Activated CD4-positive, alpha-beta T cell treated with anti-CD3 and anti-CD28 coated beads, Interleukin-2, amount 10 ng/mL, durations not matched to agents 7 days and 5 days (primary cell): ENCODE measurements at regions of chr2 and their contacts with region 1.

Region 1: DNA sequence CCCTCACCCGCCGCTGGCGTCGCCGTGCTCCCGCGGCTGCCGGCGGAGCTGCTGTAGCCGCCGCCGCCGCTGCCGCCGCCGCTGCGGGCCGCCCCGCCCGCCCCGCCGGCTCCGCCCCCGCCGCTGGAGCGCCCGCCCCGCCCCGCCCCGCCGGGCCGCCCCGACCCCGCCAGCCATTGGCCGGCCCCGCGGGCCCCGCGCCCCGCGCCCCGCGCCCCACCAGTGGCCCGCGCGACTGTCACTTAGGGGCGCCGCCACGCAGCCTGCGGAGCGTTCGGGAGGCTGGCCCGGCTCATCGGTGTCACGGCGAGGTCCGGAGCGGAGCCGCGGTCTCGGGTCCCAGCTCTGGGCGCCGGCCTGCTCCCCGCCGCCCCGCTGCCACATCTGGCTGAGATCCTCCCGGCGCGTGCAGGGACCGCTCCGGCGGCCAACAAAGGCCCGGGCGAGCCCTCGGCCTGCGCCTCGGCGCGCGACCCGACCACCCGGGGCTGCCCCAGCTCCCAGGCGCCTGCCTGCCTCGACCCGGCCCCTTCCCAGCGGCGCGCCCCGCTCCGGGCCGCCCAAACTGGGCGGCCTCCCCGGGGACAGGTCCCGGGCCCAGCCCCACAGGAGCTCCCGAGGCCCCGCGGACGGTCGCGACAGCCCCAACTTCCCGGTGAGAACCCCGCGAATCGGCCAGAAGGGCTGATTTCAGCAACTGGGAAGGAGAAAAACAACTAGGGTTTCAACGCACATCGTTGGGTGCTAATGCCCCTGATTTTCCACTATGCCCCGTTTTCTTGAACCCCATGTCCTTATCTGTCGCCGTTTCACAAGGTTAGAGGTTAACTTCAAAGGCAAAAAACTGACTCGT is at the start of gene MGAT4A:
- DNase-seq: peak; percentile 82
- H3K4me3 Mint-ChIP-seq: peak within 1 kb of the TSS; percentile 94
- H3K27ac Mint-ChIP-seq: peak within 1 kb of the TSS; percentile 95
- H3K4me1 Mint-ChIP-seq: peaks cover 59% of the 10 kb centered on the region
- H3K27me3 Mint-ChIP-seq: no peaks in the 10 kb centered on the region
- total RNA-seq, gene MGAT4A: 93.9 to 109 TPM

Region 2: DNA sequence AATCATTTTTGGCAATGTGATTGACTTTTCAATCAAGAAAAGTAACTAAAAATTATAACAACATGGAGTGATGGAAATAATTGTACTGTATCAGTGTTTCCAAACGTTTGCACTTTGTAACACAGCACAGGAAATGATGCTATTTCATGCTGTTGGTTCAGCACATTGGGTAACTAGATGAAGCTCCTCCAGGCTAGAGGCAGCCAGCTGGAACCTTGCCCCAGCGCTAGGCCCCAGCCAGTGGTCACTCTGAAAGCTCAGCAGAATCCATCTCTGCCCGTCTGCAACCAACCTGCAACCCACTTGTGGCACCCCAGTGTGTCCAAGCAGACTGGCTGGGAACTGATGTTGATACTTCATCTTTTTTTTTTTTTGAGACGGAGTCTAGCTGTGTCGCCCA is 107.6 kb before region 1 on chr2:
- CTCF ChIA-PET with region 1: no interaction called
- POLR2A ChIA-PET with region 1: no interaction called
- DNase-seq: no peak
- H3K4me3 Mint-ChIP-seq: no peak overlapping the region
- H3K27ac Mint-ChIP-seq: peak overlapping the region; percentile 46
- H3K4me1 Mint-ChIP-seq: peaks cover 23% of the 10 kb centered on the region
- H3K27me3 Mint-ChIP-seq: no peaks in the 10 kb centered on the region

Region 3: DNA sequence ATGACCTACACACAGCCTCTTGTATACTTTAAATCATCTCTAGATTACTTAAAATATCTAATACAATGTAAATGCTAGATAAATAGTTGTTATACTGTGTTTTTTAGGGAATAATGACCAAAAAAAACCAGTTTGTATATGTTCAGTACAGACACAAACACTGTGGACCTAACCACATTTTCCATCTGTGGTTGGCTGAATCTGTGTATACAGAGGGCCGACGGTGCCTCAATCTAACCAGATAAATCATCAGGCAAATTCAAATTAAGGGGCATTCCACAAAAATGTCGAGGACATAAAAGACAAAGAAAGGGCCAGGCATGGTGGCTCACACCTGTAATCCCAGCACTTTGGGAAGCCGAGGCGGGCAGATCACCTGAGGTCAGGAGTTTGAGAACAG is 14.5 kb before region 1 on chr2:
- CTCF ChIA-PET with region 1: interaction called, 25 read pairs
- POLR2A ChIA-PET with region 1: interaction called, 3 read pairs
- DNase-seq: no peak
- H3K4me3 Mint-ChIP-seq: no peak overlapping the region
- H3K27ac Mint-ChIP-seq: peak overlapping the region; percentile 80
- H3K4me1 Mint-ChIP-seq: peaks cover 75% of the 10 kb centered on the region
- H3K27me3 Mint-ChIP-seq: no peaks in the 10 kb centered on the region

Region 4: GRCh38 chr2:98771721-98772524 is 40.7 kb after region 1 on chr2:
- CTCF ChIA-PET with region 1: interaction called, 6 read pairs
- POLR2A ChIA-PET with region 1: interaction called, 13 read pairs
- DNase-seq: peak; percentile 84
- H3K4me3 Mint-ChIP-seq: peak overlapping the region; percentile 91
- H3K27ac Mint-ChIP-seq: peak overlapping the region; percentile 97
- H3K4me1 Mint-ChIP-seq: peaks cover 73% of the 10 kb centered on the region
- H3K27me3 Mint-ChIP-seq: no peaks in the 10 kb centered on the region

Region 5: GRCh38 chr2:99031481-99031880 is 300.2 kb after region 1 on chr2:
- CTCF ChIA-PET with region 1: no interaction called
- POLR2A ChIA-PET with region 1: no interaction called
- DNase-seq: no peak
- H3K4me3 Mint-ChIP-seq: no peak overlapping the region
- H3K27ac Mint-ChIP-seq: no peak overlapping the region
- H3K4me1 Mint-ChIP-seq: peaks cover 16% of the 10 kb centered on the region
- H3K27me3 Mint-ChIP-seq: no peaks in the 10 kb centered on the region